Mammary epithelial cell (primary cell): ENCODE measurements at regions of chr12 and their contacts with region 1.

Region 1: DNA sequence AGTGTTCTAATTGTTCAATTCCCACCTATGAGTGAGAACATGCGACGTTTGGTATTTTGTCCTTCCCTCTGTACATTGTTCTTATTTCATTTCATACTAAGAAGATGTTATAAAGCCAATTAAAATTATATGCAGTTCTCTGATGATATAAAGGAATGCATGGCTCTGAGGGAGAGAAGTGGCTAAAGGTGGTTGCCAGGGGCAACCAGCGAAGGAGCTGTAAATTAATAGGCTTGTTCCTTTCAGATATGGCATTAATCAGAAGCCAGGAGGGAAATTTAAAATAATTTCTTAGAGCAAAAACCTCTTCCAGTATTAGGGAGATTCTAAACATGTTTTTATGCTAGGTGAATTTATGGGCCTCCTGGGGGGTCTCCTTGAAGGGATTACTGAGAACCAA is 227.8 kb downstream of the TMEM117 start:
- DNase-seq: no peak
- H3K4me3 ChIP-seq: no peak overlapping the region
- H3K27ac ChIP-seq: no peak overlapping the region
- H3K4me1 ChIP-seq: no peaks in the 10 kb centered on the region
- H3K27me3 ChIP-seq: no peaks in the 10 kb centered on the region
- CTCF ChIP-seq: no peak

Region 2: DNA sequence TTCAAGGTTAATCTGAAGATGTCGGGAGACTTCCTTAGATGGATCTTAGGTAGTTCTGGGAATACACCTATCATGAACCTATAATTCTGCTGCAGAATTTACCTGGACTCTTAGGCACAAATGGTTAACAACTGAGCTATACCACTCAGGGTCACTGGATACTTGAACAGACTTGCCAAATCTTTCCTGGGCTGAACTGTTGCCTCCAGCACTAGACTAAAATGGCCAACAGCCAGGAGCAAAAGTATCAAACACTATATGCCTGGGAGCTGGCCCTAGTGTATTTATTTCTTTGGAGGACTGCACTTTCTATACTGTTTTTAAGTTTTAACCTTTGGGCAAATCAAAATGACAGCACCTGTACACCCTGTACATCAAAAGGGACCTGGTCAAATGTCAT is 25.0 kb after region 1 on chr12:
- CTCF ChIA-PET with region 1: interaction called, 13 read pairs
- dilution Hi-C with region 1: no loop called
- in situ Hi-C with region 1: no loop called
- intact Hi-C with region 1: no loop called
- DNase-seq: peak; percentile 37
- H3K4me3 ChIP-seq: no peak overlapping the region
- H3K27ac ChIP-seq: no peak overlapping the region
- H3K4me1 ChIP-seq: peaks cover 6% of the 10 kb centered on the region
- H3K27me3 ChIP-seq: no peaks in the 10 kb centered on the region
- CTCF ChIP-seq: no peak